ENCODE measurements at regions of chr2 and their contacts with region 1.

Region 1: GRCh38 chr2:219642465-219643080 is 15.1 kb downstream of the SLC4A3 start:
- DNase-seq: peak; percentile 99 to 100 (median 99)
- H3K4me3 ChIP-seq: no peak overlapping the region
- H3K27ac ChIP-seq: peak overlapping the region; percentile 77 to 79
- H3K4me1 ChIP-seq: peaks cover 28% of the 10 kb centered on the region
- H3K27me3 ChIP-seq: no peaks in the 10 kb centered on the region
- CTCF ChIP-seq: peak; percentile 99 to 100 (median 100)
- EP300 ChIP-seq: peak; percentile 60
- POLR2A ChIP-seq: peak; percentile 63

Region 2: GRCh38 chr2:219543601-219544358 is 98.8 kb before region 1 on chr2 and contains the starts of genes CHPF and TMEM198:
- intact Hi-C with region 1: loop called (anchors 1 to 5 kb)
- DNase-seq: peak; percentile 99
- H3K4me3 ChIP-seq: peak within 1 kb of the TSS; percentile 82
- H3K27ac ChIP-seq: peak within 1 kb of the TSS; percentile 88 to 95
- H3K4me1 ChIP-seq: peaks cover 9% of the 10 kb centered on the region
- H3K27me3 ChIP-seq: no peaks in the 10 kb centered on the region
- CTCF ChIP-seq: no peak
- EP300 ChIP-seq: peak; percentile 77
- POLR2A ChIP-seq: peak; percentile 74
- total RNA-seq, gene CHPF: 89.4 to 181 (median 135) TPM
- total RNA-seq, gene TMEM198: 5.8 to 22.7 (median 10.7) TPM

Region 3: GRCh38 chr2:219560037-219560892 is 82.3 kb before region 1 on chr2:
- intact Hi-C with region 1: loop called in 2 of 4 experiments (anchors 5 kb)
- DNase-seq: peak; percentile 21 to 48 (median 28)
- H3K4me3 ChIP-seq: no peak overlapping the region
- H3K27ac ChIP-seq: peak overlapping the region in 1 of 2 donors; percentile 38
- H3K4me1 ChIP-seq: peaks cover 4% of the 10 kb centered on the region
- H3K27me3 ChIP-seq: no peaks in the 10 kb centered on the region
- CTCF ChIP-seq: peak; percentile 25 to 49 (median 32)
- EP300 ChIP-seq: no peak
- POLR2A ChIP-seq: no peak

Region 4: DNA sequence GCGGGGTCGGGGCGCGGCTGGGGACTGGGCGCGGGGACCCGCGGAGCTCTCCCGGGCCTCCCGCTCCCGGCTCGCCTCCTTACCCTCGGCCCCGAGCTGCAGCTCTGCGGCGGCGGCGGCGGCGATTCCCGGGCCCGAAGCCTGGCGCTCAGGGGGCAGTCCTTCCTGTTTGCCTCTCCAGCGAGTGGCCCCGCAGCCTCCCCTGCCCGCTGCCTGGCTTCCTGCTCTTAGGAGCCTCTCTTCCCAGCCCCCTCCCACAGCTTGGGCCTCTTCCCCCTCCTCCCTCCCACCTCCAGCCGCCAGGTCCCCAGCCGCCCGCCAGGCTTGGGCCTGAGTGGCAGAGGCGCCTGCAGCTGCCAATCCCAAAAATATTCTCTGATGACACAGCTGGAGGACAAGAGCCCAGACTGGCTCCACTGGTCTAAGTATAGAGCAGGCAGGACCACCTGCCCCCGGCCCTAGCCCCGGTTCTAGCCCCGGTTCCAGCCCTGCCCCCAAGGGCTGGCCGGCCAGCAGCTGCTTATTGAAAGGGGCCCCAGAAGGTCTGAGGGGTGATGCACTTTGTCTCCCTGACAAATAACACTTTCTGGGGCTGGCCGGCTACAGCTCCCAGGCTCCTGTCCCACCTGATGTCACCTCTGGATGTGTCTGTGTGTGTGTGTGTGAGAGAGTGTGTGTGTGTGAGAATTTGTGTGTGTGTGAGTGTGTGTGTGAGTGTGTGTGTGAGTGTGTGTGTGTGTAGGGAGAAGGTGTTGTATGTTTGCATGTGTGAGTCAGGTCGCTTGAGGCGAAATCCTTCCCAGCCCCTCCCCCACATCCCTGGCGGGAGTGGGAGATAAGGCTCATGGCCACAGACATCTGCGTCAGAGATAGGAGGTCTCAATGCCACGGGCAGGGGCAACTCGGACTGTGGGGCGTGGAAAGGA is 71.0 kb before region 1 on chr2 and contains the start of gene OBSL1:
- intact Hi-C with region 1: loop called in 2 of 4 experiments (anchors 5 kb)
- DNase-seq: peak; percentile 93 to 96 (median 94)
- H3K4me3 ChIP-seq: peak within 1 kb of the TSS; percentile 65
- H3K27ac ChIP-seq: peak within 1 kb of the TSS; percentile 95 to 97
- H3K4me1 ChIP-seq: peaks cover 11% of the 10 kb centered on the region
- H3K27me3 ChIP-seq: no peaks in the 10 kb centered on the region
- CTCF ChIP-seq: peak in 1 of 3 donors; percentile 14
- EP300 ChIP-seq: no peak
- POLR2A ChIP-seq: peak; percentile 49
- total RNA-seq, gene OBSL1: 230 to 740 (median 473) TPM

Region 5: GRCh38 chr2:219609149-219609750 is 33.3 kb before region 1 on chr2:
- intact Hi-C with region 1: loop called in 1 of 4 experiments (anchors 2 kb)
- DNase-seq: peak; percentile 54 to 77 (median 67)
- H3K4me3 ChIP-seq: no peak overlapping the region
- H3K27ac ChIP-seq: peak overlapping the region; percentile 93 to 95
- H3K4me1 ChIP-seq: peaks cover 61% of the 10 kb centered on the region
- H3K27me3 ChIP-seq: no peaks in the 10 kb centered on the region
- CTCF ChIP-seq: no peak
- EP300 ChIP-seq: no peak
- POLR2A ChIP-seq: no peak

Region 6: DNA sequence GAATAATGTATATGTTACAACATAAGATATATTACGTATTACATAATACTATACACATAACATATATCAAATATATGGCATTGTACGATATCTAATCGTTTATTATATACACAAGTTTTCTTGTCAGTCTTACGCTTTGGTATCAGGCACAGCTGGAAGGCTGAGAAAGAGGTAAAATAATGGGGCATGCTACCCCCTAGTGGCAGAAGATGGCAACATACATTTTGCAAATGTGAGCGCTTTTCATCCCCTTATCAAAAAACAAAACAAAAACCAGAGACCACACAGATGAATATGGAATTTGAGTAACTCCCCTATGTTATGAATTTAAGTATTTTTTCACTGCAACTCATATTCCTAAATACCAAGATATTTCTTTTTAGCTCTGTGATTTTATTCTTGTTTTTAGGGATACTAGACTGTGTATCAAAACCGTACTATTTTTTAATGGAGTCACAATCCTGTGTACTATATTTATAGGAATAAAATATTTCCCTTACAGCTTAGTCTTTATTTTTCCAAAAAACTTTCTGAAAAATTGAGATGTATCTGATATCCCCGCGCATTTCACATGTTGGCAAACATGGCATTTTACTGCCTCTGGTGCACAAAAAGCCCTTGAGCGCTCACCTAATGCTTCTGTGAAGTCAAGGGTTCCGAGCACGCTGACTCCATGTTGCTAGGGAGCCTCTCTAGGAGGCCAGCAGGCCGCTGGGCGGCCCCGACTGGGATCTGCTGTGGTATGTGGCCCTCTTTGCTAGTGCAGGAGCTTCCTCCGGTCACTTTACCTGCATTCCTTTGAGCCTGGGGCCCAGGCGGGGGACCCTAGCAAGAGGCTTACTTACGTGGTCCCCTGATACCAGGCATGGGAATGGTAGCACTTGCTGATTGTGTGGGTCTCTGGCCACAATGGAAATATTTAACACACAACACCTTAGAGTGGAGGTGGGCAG is 47.4 kb after region 1 on chr2:
- intact Hi-C with region 1: loop called in 2 of 4 experiments (anchors 5 to 10 kb)
- DNase-seq: peak in 4 of 5 donors; percentile 42 to 74 (median 49)
- H3K4me3 ChIP-seq: no peak overlapping the region
- H3K27ac ChIP-seq: no peak overlapping the region
- H3K4me1 ChIP-seq: peaks cover 5% of the 10 kb centered on the region
- H3K27me3 ChIP-seq: no peaks in the 10 kb centered on the region
- CTCF ChIP-seq: peak; percentile 73 to 86 (median 78)
- EP300 ChIP-seq: no peak
- POLR2A ChIP-seq: no peak